HCT116 (cell line): ENCODE measurements at regions of chr9 and their contacts with region 1.

Region 1: DNA sequence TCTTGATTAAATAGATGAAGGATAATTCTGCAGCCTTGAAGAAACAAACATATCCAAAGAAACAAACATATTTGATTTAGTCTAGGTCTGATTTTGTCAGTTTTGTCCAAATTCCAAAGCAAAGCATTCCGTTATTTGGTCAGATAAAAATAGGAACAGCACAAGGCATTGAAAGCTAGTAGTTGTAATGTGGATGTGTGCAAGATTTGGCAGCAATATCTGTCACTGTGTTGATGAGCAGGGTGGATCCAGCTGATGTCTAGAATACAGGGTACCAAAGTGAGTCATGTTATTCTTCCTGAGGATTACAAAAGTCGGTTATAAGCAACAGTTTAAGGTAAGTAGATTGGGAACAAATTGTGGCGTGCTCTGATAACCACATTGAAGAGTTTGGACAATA is 69.3 kb upstream of the PLPPR1 start:
- DNase-seq: no peak
- ATAC-seq: no peak
- H3K4me3 ChIP-seq: no peak overlapping the region
- H3K27ac ChIP-seq: no peak overlapping the region
- H3K4me1 ChIP-seq: no peaks in the 10 kb centered on the region
- H3K27me3 ChIP-seq: peaks cover 5% of the 10 kb centered on the region
- CTCF ChIP-seq: no peak
- POLR2A ChIP-seq: no peak
- RAD21 ChIP-seq: no peak

Region 2: DNA sequence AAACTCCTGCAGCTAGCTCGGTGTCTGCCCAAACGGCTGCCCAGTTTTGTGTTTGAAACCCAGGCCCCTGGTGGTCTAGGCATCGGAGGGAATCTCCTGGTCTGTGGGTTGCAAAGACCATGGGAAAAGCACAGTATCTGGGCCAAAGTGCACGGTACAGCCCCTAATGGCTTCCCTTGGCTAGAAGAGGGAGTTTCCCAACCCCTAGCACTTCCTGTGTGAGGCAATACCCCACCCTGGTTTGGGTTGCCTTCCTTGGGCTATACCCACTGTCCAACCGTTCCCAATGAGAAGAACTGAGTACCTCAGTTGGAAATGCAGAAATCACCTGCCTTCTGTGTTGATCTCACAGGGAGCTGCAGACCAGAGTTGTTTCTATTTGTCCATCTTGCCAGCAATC is 339.6 kb before region 1 on chr9:
- CTCF ChIA-PET with region 1: no interaction called
- POLR2A ChIA-PET with region 1: no interaction called
- RAD21 ChIA-PET with region 1: no interaction called
- intact Hi-C with region 1: loop called (anchors 10 kb)
- DNase-seq: no peak
- ATAC-seq: no peak
- H3K4me3 ChIP-seq: no peak overlapping the region
- H3K27ac ChIP-seq: no peak overlapping the region
- H3K4me1 ChIP-seq: no peaks in the 10 kb centered on the region
- H3K27me3 ChIP-seq: no peaks in the 10 kb centered on the region
- CTCF ChIP-seq: no peak
- POLR2A ChIP-seq: no peak
- RAD21 ChIP-seq: no peak